OCI-LY7 (cell line): ENCODE measurements at regions of chr3 and their contacts with region 1.

Region 1: DNA sequence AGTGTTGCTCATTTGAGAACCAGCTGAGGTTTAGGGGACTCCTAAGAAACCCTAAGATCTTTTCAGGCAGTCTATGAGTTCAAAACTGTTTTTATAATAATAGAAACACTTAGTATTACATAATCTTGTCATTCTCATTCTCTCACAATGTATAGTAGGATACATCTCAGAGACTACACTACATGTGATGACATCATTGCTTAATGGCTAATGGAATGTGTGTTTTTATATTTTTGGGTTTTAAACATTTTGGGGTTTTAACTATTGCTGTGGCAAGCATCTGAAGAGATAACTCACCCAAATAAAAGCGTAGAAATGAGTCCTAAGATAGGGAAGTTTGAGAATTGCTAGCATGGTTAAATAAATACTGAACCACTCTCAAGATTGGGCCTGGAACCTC is 659.8 kb downstream of the PLOD2 start:
- DNase-seq: no peak
- H3K4me3 ChIP-seq: no peak overlapping the region
- H3K27ac ChIP-seq: no peak overlapping the region
- H3K4me1 ChIP-seq: no peaks in the 10 kb centered on the region
- CTCF ChIP-seq: no peak

Region 2: GRCh38 chr3:144995856-144996255 is 505.4 kb before region 1 on chr3:
- CTCF ChIA-PET with region 1: no interaction called
- POLR2A ChIA-PET with region 1: no interaction called
- intact Hi-C with region 1: no loop called
- DNase-seq: no peak
- H3K4me3 ChIP-seq: no peak overlapping the region
- H3K27ac ChIP-seq: no peak overlapping the region
- H3K4me1 ChIP-seq: no peaks in the 10 kb centered on the region
- CTCF ChIP-seq: no peak

Region 3: GRCh38 chr3:145557405-145557804 is 56.2 kb after region 1 on chr3:
- CTCF ChIA-PET with region 1: no interaction called
- POLR2A ChIA-PET with region 1: no interaction called
- intact Hi-C with region 1: loop called (anchors 10 kb)
- DNase-seq: no peak
- H3K4me3 ChIP-seq: no peak overlapping the region
- H3K27ac ChIP-seq: no peak overlapping the region
- H3K4me1 ChIP-seq: no peaks in the 10 kb centered on the region
- CTCF ChIP-seq: no peak